Heart left ventricle (tissue), 16 donors: ENCODE measurements at regions of chr10 and their contacts with region 1.

Region 1: DNA sequence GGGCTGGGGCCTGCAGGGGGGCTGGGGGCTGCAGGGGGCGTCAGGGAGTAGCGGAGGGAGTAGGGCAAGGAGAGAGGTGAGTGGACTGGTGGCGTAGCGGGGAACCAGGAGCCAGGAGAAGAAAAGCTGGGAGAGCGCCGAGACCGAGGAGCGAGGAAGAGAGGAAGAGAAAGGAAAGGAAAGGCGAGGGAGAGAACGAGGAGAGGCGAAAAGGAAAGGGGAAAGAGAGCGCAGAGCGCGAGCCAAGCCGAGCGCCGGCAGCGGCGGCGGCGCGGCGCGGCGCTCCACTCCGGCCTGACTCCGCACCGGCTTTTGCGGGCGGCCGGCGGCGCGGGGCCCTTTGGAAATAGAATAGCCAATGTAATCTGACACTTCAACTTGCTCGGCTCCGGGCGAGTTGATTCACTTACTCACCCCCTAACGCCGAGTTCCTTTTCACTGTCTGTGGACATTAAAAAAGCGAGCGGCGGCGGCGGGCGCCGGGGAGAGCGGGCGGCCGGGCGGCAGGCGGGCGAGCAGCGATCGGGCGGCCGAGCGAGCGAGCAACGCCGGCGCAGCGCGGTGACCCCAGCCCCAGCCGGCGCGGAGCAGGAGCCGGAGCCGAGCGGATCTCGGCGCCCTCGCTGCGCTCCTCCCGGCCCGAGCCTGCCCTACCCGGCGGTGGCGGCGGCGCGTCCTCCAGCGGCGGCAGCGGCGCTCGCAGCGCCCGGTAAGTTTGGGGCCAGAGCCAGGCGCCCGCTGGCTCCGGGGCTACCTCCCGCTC is at the start of gene ZMIZ1:
- DNase-seq: peak; percentile 91 to 94 (median 92)
- ATAC-seq: peak; percentile 27 to 54 (median 43)
- H3K4me3 ChIP-seq: peak within 1 kb of the TSS; percentile 76 to 99 (median 92)
- H3K27ac ChIP-seq: peak within 1 kb of the TSS; percentile 95 to 100 (median 98)
- H3K4me1 ChIP-seq: peaks cover 10 to 48% (median 41%) of the 10 kb centered on the region in 12 donors
- H3K27me3 ChIP-seq: no peaks in the 10 kb centered on the region
- CTCF ChIP-seq: peak in 6 of 12 donors; percentile 6 to 50 (median 36)
- POLR2A ChIP-seq: peak; percentile 37 to 90
- total RNA-seq, gene ZMIZ1: 39.8 to 75.4 (median 50.5) TPM

Region 2: DNA sequence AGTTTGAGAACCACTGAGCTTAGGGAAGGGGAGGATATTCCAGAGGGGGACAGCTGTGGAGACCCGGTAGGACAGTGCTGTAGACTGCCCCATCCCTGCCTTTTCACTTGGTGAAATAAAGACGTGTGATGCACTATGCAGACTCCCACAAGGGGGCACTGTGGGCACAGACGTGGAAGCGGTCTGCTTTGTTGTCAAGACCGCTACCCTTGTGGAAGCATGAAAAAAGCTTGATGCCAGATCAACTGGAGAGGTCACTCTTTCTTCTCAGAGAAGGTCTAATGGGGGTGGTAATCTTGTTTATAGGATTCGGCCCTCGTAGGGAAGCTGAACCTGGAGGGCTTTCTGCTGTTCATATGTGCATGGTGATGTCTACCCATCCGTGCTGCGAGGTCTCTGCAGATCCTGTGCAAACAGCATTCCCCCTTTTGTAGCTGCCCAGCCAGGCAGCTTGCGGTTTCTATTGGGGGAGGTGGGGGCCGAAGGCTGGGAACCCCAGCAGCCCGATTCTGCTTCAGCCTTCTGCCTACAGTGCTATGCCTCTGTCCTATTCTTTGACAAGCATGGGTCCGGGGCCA is 1021.3 kb before region 1 on chr10:
- intact Hi-C with region 1: loop called in 2 of 10 experiments (anchors 5 to 10 kb)
- DNase-seq: peak; percentile 84 to 93 (median 86)
- ATAC-seq: peak; percentile 55 to 81 (median 78)
- H3K4me3 ChIP-seq: no peak overlapping the region
- H3K27ac ChIP-seq: no peak overlapping the region
- H3K4me1 ChIP-seq: peaks cover 0 to 23% (median 8%) of the 10 kb centered on the region in 12 donors
- H3K27me3 ChIP-seq: no peaks in the 10 kb centered on the region
- CTCF ChIP-seq: peak; percentile 85 to 95 (median 88)
- POLR2A ChIP-seq: no peak

Region 3: GRCh38 chr10:78437998-78438906 is 630.5 kb before region 1 on chr10:
- intact Hi-C with region 1: loop called in 1 of 10 experiments (anchors 10 kb)
- DNase-seq: no peak
- ATAC-seq: peak in 2 of 4 donors; percentile 13 to 38
- H3K4me3 ChIP-seq: no peak overlapping the region
- H3K27ac ChIP-seq: no peak overlapping the region
- H3K4me1 ChIP-seq: peaks cover 0 to 36% (median 14%) of the 10 kb centered on the region in 12 donors
- H3K27me3 ChIP-seq: no peaks in the 10 kb centered on the region
- CTCF ChIP-seq: peak in 2 of 12 donors; percentile 12 to 28
- POLR2A ChIP-seq: no peak

Region 4: DNA sequence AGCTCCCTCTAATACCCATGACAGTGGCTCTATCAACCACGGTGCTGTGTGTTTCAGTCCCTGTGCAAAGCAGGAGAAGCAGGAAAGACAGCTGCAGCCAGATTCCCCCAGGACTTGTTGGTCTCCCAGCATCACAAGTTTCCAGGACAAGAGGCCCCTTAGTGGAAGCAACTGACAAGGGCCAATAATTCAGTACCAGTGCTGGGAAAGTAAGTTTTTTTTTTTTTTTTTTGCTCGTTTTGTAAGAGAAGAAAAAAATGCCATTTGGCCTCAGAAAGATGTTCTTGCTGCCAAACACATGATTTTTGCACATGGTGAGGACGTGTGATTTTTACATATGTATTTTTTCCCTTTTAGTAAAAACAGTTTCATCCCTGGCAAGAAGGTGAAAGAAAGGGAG is 284.2 kb before region 1 on chr10:
- intact Hi-C with region 1: loop called in 2 of 10 experiments (anchors 5 kb)
- DNase-seq: peak in 1 of 5 donors; percentile 45
- ATAC-seq: no peak
- H3K4me3 ChIP-seq: no peak overlapping the region
- H3K27ac ChIP-seq: no peak overlapping the region
- H3K4me1 ChIP-seq: peaks cover 0 to 27% (median 6%) of the 10 kb centered on the region in 12 donors
- H3K27me3 ChIP-seq: no peaks in the 10 kb centered on the region
- CTCF ChIP-seq: no peak
- POLR2A ChIP-seq: no peak

Region 5: GRCh38 chr10:78972947-78973900 is 95.5 kb before region 1 on chr10:
- intact Hi-C with region 1: loop called in 8 of 10 experiments (anchors 1 to 10 kb)
- DNase-seq: peak; percentile 86 to 91 (median 89)
- ATAC-seq: peak; percentile 45 to 80 (median 72)
- H3K4me3 ChIP-seq: peak overlapping the region; percentile 11 to 66 (median 54)
- H3K27ac ChIP-seq: peak overlapping the region; percentile 91 to 100 (median 98)
- H3K4me1 ChIP-seq: peaks cover 5 to 45% (median 30%) of the 10 kb centered on the region in 12 donors
- H3K27me3 ChIP-seq: no peaks in the 10 kb centered on the region
- CTCF ChIP-seq: no peak
- POLR2A ChIP-seq: peak in 1 of 2 donors; percentile 73

Region 6: DNA sequence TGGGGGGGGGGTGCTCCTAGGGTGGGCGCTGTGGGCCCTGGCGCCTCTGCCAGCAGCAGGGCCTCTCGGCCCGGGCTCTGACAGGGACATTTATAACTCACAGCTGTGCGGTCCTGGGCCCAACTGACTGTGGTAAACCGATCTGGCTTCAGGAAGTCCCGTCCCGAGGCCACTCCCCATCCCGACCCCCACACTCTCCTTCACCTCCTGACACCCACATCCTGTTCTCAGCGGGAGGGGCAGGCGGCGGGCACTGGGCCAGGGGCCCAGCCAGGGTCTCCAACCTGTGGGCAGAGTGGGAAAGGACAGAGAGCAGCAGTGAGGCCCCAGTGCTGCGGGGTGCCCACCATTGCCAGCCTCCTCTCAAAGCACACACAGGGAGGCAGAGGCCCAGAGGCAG is 69.1 kb after region 1 on chr10:
- intact Hi-C with region 1: loop called in 6 of 10 experiments (anchors 2 to 10 kb)
- DNase-seq: peak in 3 of 5 donors; percentile 58 to 68 (median 63)
- ATAC-seq: peak in 3 of 4 donors; percentile 8 to 31 (median 18)
- H3K4me3 ChIP-seq: peak overlapping the region in 2 of 12 donors; percentile 21
- H3K27ac ChIP-seq: peak overlapping the region; percentile 80 to 97 (median 89)
- H3K4me1 ChIP-seq: peaks cover 51 to 100% (median 98%) of the 10 kb centered on the region in 12 donors
- H3K27me3 ChIP-seq: no peaks in the 10 kb centered on the region
- CTCF ChIP-seq: no peak
- POLR2A ChIP-seq: no peak

Region 7: DNA sequence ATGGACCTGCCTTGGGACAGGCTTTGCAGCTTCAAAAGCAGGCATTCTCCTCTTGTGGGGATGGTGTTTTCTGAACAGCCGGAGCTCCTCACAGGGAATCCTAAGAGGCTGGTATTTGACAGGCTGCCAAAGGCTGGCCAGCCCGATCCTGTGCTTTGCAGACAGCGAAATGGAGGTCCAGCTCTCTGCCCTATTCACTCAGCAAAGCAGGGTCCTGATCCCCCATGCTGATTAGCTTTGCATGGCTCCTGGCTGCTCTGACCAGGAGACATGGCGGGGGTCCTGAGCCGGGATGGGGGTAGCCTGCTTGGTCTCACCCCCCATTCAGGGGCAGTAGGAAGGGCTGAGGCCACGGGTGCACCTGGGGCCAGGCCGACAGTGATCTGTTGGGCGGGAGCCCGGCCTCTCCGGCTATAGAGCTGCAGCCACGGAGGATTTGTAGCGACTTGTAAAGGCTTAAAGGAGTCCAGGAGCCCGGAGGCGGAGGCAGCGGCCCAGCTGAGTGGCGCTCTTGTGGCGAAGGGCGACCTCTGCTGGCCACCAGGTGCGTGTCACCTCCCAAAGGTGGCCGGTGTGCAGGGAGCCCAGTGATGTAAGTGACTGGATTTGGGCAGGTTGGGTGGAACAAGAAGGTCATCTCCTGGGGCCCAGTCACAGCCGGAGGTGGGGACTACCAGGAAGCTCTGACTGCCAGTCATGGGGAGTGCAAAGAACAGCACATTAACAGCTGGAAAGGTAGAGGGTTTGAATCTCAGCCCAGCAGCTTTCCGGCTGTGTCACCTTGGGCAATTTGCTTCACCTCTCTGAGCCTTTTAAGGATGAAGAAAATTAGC is 126.6 kb after region 1 on chr10:
- intact Hi-C with region 1: loop called (anchors 1 to 5 kb)
- DNase-seq: peak; percentile 85 to 93 (median 90)
- ATAC-seq: peak; percentile 72 to 85 (median 77)
- H3K4me3 ChIP-seq: peak overlapping the region in 1 of 12 donors; percentile 1
- H3K27ac ChIP-seq: peak overlapping the region in 11 of 12 donors; percentile 41 to 78 (median 70)
- H3K4me1 ChIP-seq: peaks cover 0 to 65% (median 46%) of the 10 kb centered on the region in 12 donors
- H3K27me3 ChIP-seq: no peaks in the 10 kb centered on the region
- CTCF ChIP-seq: peak; percentile 90 to 99 (median 97)
- POLR2A ChIP-seq: no peak

Region 8: DNA sequence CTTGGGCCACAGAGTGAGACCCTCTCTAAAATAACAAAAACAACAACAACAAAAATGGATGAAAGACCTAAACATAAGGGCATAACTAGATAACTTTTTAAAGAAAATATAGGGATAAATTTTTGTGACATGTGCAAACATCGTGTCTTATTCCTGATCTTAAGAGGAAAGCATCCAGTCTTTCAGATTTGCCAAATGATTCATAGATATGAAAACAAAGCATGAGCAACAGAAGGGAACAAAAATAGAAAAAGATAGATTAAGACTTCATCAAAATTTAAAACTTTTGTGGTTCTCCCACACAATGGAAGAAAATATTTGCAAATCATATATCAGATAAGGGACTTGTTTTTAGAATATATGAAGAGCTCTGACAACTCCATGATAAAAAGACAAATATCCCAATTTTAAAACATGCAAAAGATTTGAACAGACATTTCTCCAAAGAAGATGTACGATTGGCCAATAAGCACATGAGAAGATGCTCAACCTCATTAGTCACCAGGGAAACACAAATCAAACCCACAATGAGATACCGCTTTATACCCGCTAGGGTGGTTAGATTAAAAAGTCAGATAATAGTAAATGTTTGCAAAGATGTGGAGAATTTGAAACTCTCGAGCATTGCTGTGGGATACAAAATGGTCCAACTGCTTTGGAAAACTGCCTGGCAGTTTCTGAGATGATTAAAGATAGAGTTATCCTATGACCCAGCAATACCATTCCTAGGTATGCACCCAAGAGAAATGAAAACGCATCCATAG is 298.9 kb after region 1 on chr10:
- intact Hi-C with region 1: no loop called
- DNase-seq: no peak
- ATAC-seq: no peak
- H3K4me3 ChIP-seq: no peak overlapping the region
- H3K27ac ChIP-seq: no peak overlapping the region
- H3K4me1 ChIP-seq: no peaks in the 10 kb centered on the region
- H3K27me3 ChIP-seq: no peaks in the 10 kb centered on the region
- CTCF ChIP-seq: no peak
- POLR2A ChIP-seq: no peak